ENCODE measurements at regions of chr12 and their contacts with region 1.

Region 1: GRCh38 chr12:32679091-32679919 is at the start of gene DNM1L:
- DNase-seq: peak; percentile 86
- ATAC-seq: peak; percentile 95
- H3K4me3 Mint-ChIP-seq: peak within 1 kb of the TSS; percentile 90
- H3K27ac Mint-ChIP-seq: peak within 1 kb of the TSS; percentile 83
- H3K4me1 Mint-ChIP-seq: peaks cover 36% of the 10 kb centered on the region
- H3K27me3 Mint-ChIP-seq: no peaks in the 10 kb centered on the region
- CTCF ChIP-seq: no peak
- total RNA-seq, gene DNM1L: 67.8 and 83.1 TPM in 2 replicates

Region 2: GRCh38 chr12:31117203-31118011 is 1561.9 kb before region 1 on chr12:
- CTCF ChIA-PET with region 1: no interaction called
- POLR2A ChIA-PET with region 1: no interaction called
- intact Hi-C with region 1: loop called (anchors 10 kb)
- DNase-seq: peak; percentile 55
- ATAC-seq: peak; percentile 73
- H3K4me3 Mint-ChIP-seq: peak overlapping the region; percentile 79
- H3K27ac Mint-ChIP-seq: no peak overlapping the region
- H3K4me1 Mint-ChIP-seq: peaks cover 9% of the 10 kb centered on the region
- H3K27me3 Mint-ChIP-seq: no peaks in the 10 kb centered on the region
- CTCF ChIP-seq: no peak

Region 3: DNA sequence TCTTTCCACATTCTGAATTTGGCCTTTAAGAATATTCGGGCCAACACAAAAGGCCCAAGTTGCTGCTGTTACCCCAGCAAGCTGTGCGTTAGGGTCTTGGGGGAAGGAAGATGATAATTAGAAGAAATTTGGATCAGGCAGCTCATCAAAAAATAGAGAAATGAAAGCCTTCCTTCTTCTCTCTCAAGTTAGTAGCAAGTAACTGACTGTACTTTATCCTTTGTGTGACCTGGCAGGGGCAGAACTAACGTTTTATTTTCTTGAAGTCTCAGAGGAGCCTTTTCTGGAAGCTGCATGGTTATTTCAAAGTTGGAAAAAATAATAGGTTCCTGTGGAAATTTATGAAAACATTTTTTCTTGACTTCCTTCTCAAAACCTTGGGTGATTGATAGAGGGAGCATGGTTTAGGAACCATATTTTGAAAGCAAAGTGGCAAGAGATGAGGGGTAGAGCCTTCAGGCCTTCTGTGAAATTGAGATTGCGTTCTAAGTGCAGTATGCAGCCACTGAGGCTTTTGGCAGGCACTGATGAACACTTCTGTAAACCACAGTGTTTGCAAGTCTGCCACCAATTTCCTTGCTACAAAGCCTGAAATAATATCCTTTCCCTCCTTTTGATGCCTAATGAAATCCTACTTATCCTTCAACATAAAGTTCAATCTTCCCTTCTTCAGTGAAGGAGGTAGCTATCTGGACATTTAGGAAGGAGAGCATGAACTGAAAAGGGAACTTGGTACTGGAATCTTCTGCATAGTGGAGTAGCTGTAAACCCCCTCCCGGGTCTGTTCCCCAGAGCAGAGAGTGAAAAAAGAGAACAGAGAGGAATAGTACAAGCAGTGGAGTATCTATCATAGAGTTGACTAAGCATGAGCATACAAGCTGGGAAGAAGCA is 156.7 kb before region 1 on chr12:
- CTCF ChIA-PET with region 1: no interaction called
- POLR2A ChIA-PET with region 1: no interaction called
- intact Hi-C with region 1: loop called (anchors 5 kb)
- DNase-seq: no peak
- ATAC-seq: peak; percentile 82
- H3K4me3 Mint-ChIP-seq: peak overlapping the region; percentile 67
- H3K27ac Mint-ChIP-seq: peak overlapping the region; percentile 85
- H3K4me1 Mint-ChIP-seq: peaks cover 28% of the 10 kb centered on the region
- H3K27me3 Mint-ChIP-seq: no peaks in the 10 kb centered on the region
- CTCF ChIP-seq: no peak

Region 4: GRCh38 chr12:32755654-32756475 is 76.6 kb after region 1 on chr12 and contains the start of gene YARS2:
- CTCF ChIA-PET with region 1: interaction called, 3 read pairs
- POLR2A ChIA-PET with region 1: interaction called, 7 read pairs
- intact Hi-C with region 1: loop called (anchors 1 kb)
- DNase-seq: peak; percentile 75
- ATAC-seq: peak; percentile 87
- H3K4me3 Mint-ChIP-seq: peak within 1 kb of the TSS; percentile 95
- H3K27ac Mint-ChIP-seq: peak within 1 kb of the TSS; percentile 92
- H3K4me1 Mint-ChIP-seq: peaks cover 17% of the 10 kb centered on the region
- H3K27me3 Mint-ChIP-seq: no peaks in the 10 kb centered on the region
- CTCF ChIP-seq: no peak
- total RNA-seq, gene YARS2: 19.6 and 23.2 TPM in 2 replicates

Measured in activated B cell treated with CpG ODN at 0.5 μM for 24 hours (primary cell).